ENCODE measurements at regions of chr2 and their contacts with region 1.

Region 1: DNA sequence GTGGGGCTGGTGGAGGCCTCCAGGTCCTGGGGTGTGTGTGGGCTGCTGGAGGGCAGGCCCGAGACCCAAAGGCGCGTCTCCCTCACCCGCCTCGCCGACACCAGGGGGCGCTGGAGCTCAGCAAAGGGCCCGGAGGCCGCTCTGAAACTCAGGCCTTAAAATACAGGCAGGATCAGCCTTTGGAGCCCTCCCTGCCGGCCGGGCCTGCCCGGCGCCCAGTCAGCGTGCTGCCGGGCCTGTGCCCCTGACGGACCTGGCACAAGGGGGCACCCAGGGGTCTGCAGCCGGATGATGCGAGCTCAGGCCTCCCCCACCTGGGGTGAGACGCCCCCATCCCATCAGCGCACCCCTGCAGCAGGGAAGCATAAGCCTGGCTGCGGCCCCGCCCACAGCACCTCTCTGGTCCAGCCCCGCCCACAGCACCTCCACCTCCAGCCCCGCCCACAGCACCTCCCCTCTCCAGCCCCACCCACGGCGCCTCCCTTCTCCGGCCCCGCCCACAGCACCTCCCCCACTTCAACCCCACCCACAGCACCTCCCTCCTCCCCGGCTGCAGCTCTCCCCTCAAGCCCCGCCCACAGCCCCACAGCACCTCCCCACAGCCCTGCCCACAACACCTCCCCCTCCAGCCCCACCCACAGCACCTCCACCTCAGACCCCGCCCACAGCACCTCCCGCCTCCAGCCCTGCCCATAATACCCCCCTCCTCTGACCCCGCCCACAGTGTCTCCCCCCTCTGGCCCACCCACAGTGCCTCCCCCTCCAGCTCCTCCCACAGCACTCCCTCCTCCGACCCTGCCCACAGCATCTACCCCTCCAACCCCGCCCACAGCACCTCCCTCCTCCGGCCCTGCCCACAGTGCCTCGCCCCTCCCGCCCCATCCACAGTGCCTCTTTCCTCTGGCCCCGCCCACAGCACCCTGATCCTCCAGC is 92.8 kb upstream of the OTOS start:
- DNase-seq: peak; percentile 84
- H3K4me3 ChIP-seq: peak overlapping the region; percentile 39 to 52 (median 50)
- H3K27ac ChIP-seq: no peak overlapping the region
- H3K4me1 ChIP-seq: peaks cover 24% of the 10 kb centered on the region
- H3K27me3 ChIP-seq: no peaks in the 10 kb centered on the region
- CTCF ChIP-seq: peak; percentile 64 to 93

Region 2: GRCh38 chr2:240250985-240251847 is 18.0 kb after region 1 on chr2:
- CTCF ChIA-PET with region 1: no interaction called
- dilution Hi-C with region 1: no loop called
- in situ Hi-C with region 1: no loop called
- intact Hi-C with region 1: loop called (anchors 1 kb)
- DNase-seq: peak; percentile 83
- H3K4me3 ChIP-seq: peak overlapping the region in 2 of 3 experiments; percentile 21 to 33
- H3K27ac ChIP-seq: peak overlapping the region; percentile 30
- H3K4me1 ChIP-seq: peaks cover 35% of the 10 kb centered on the region
- H3K27me3 ChIP-seq: no peaks in the 10 kb centered on the region
- CTCF ChIP-seq: no peak

Region 3: DNA sequence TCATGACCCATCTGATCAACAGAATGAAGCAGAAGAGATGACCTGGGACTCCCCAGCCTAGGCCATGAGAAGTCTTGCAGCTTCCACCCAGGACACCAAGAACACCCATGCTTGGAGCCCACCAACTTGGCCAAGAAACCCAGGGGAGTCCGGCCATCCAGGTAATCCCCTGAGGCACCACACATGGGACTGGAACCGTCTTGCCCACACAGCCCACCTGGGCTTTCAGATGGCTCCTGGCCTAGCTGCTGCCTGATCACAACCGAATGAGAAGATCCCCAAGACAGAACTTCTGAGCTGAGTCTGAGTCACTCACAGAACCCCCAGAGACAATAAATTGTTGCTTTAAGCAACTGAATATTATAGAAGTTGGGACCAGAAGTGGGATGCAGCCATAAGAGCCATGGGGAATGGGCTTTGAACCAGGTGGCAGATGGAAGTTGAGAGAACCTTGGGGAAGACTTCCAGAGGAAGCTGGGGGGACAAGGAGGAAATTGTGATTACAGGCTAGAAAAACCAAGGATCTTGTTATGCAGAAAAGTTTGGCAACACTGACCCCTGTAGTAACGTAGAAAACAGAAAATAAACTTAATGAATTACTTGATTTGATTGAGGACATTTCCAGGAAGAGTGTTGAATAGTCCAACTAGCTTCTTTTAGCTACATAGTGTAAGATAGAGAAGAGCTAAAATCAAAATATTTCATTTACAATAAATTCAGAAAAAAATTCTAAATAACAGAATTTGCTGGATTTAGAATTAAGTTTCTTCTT is 110.1 kb after region 1 on chr2:
- CTCF ChIA-PET with region 1: no interaction called
- dilution Hi-C with region 1: no loop called
- in situ Hi-C with region 1: no loop called
- intact Hi-C with region 1: loop called (anchors 1 kb)
- DNase-seq: no peak
- H3K4me3 ChIP-seq: no peak overlapping the region
- H3K27ac ChIP-seq: no peak overlapping the region
- H3K4me1 ChIP-seq: no peaks in the 10 kb centered on the region
- H3K27me3 ChIP-seq: no peaks in the 10 kb centered on the region
- CTCF ChIP-seq: peak in 1 of 2 donors; percentile 16

Region 4: DNA sequence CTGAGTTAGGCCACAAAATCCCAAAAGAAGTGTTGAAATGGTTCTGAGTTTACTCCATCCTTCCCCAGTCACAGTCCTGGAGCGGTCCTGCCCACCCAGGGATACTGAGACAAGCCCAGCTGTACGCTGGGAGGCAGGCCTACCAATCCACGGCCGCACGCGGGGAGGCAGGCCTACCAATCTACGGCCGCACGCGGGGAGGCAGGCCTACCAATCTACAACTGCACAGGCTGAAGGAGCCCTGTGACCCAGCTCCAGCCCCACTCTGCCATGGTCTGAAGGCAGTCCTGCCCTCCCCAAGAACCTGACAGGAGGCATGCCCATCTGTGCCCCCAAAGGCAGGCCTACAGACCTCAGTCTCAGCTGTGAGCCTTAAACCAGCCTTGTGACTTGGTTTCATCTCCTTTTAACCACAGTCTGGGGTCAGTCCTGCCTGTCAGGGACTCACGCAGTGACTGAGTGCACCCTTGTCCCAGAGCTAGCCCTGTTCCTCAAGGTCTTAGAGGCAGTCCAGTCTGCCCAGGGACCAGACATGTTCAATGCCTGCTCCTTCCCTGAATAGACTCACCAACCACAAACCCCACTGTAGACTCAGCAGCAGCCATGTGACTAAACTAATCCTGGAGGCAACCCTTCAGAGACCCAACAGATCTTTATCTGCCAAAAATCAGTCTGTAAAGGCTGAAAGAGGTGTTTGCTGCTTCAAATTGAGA is 239.0 kb after region 1 on chr2:
- CTCF ChIA-PET with region 1: no interaction called
- dilution Hi-C with region 1: loop called (anchors 10 kb)
- in situ Hi-C with region 1: no loop called
- intact Hi-C with region 1: no loop called
- DNase-seq: peak; percentile 47
- H3K4me3 ChIP-seq: no peak overlapping the region
- H3K27ac ChIP-seq: no peak overlapping the region
- H3K4me1 ChIP-seq: no peaks in the 10 kb centered on the region
- H3K27me3 ChIP-seq: no peaks in the 10 kb centered on the region
- CTCF ChIP-seq: no peak

Region 5: GRCh38 chr2:240566203-240567136 is 333.2 kb after region 1 on chr2:
- CTCF ChIA-PET with region 1: no interaction called
- dilution Hi-C with region 1: no loop called
- in situ Hi-C with region 1: no loop called
- intact Hi-C with region 1: loop called (anchors 5 kb)
- DNase-seq: peak; percentile 73
- H3K4me3 ChIP-seq: peak overlapping the region in 2 of 3 experiments; percentile 65 to 67
- H3K27ac ChIP-seq: peak overlapping the region; percentile 61
- H3K4me1 ChIP-seq: peaks cover 46% of the 10 kb centered on the region
- H3K27me3 ChIP-seq: no peaks in the 10 kb centered on the region
- CTCF ChIP-seq: peak; percentile 68 to 73